ENCODE measurements at regions of chr20 and their contacts with region 1.

Region 1: DNA sequence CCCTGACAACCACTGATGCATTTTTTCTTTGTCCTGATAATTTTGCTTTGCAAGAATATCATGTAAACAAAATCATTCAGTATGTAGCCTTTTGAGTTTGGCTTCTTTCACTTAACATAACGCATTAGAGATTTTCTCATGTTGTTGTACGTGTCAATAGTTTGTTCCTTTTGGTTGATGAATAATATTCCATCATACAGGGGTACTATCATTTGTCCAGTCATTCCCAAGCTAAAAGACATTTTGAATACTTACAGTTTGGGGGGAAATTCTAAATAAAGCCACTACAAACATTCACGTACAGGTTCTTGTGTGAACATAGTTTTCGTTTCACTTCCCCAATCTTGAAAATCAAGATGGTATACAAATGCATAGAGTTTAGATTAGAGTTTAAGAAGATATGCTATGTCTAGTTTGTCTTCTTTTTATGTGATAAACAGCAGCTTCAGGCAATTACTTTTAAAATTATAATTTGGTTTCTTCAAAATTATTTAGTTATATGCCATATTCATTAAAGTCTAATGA is 5.2 kb downstream of the HAO1 start:
- DNase-seq: no peak
- H3K4me3 Mint-ChIP-seq: no peak overlapping the region
- H3K27ac Mint-ChIP-seq: no peak overlapping the region
- H3K4me1 Mint-ChIP-seq: no peaks in the 10 kb centered on the region
- H3K27me3 Mint-ChIP-seq: no peaks in the 10 kb centered on the region
- CTCF ChIP-seq: no peak

Region 2: DNA sequence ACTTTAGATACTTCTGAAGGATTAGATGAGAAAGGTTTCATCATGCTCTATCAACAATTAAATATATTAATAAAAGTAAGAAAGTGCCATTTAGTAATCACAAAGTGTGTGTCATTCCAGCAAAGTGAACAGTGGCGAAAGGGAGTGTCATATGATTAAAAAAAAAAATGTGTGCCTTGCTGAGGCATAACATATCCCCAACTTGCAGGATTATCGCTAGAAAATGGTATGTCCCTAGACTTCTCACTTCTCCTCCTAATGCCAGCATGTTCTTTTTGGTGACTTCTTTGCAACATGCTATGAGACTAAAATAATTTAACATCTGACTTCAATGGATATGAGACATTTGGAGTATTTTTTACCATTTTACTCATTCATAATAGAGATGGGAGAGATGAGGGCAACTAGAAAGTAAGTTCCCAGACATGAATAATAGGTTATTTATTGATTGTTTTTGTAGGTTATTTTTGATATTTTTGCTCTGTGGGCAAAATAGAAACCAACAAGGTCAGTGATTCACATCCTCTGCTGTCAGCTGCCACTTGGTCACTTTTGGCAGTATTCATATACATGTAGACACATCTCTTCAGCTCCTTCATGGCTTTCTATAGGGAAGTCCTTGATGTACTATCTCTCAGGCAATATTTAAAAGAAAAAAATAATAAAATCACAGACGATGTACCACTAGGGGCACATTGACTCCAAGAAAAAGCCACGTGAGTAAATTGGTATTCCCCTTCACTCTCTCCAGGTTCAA is 797.5 kb before region 1 on chr20:
- CTCF ChIA-PET with region 1: no interaction called
- POLR2A ChIA-PET with region 1: no interaction called
- intact Hi-C with region 1: no loop called
- DNase-seq: no peak
- H3K4me3 Mint-ChIP-seq: no peak overlapping the region
- H3K27ac Mint-ChIP-seq: no peak overlapping the region
- H3K4me1 Mint-ChIP-seq: peaks cover 5% of the 10 kb centered on the region
- H3K27me3 Mint-ChIP-seq: no peaks in the 10 kb centered on the region
- CTCF ChIP-seq: no peak

Region 3: GRCh38 chr20:7682916-7683315 is 252.2 kb before region 1 on chr20:
- CTCF ChIA-PET with region 1: no interaction called
- POLR2A ChIA-PET with region 1: no interaction called
- intact Hi-C with region 1: no loop called
- DNase-seq: no peak
- H3K4me3 Mint-ChIP-seq: no peak overlapping the region
- H3K27ac Mint-ChIP-seq: no peak overlapping the region
- H3K4me1 Mint-ChIP-seq: no peaks in the 10 kb centered on the region
- H3K27me3 Mint-ChIP-seq: no peaks in the 10 kb centered on the region
- CTCF ChIP-seq: no peak

Region 4: GRCh38 chr20:7959484-7959883 is 24.4 kb after region 1 on chr20:
- CTCF ChIA-PET with region 1: interaction called, 10 read pairs
- POLR2A ChIA-PET with region 1: interaction called, 4 read pairs
- intact Hi-C with region 1: no loop called
- DNase-seq: peak; percentile 74
- H3K4me3 Mint-ChIP-seq: no peak overlapping the region
- H3K27ac Mint-ChIP-seq: no peak overlapping the region
- H3K4me1 Mint-ChIP-seq: peaks cover 6% of the 10 kb centered on the region
- H3K27me3 Mint-ChIP-seq: peaks cover 6% of the 10 kb centered on the region
- CTCF ChIP-seq: no peak

Region 5: DNA sequence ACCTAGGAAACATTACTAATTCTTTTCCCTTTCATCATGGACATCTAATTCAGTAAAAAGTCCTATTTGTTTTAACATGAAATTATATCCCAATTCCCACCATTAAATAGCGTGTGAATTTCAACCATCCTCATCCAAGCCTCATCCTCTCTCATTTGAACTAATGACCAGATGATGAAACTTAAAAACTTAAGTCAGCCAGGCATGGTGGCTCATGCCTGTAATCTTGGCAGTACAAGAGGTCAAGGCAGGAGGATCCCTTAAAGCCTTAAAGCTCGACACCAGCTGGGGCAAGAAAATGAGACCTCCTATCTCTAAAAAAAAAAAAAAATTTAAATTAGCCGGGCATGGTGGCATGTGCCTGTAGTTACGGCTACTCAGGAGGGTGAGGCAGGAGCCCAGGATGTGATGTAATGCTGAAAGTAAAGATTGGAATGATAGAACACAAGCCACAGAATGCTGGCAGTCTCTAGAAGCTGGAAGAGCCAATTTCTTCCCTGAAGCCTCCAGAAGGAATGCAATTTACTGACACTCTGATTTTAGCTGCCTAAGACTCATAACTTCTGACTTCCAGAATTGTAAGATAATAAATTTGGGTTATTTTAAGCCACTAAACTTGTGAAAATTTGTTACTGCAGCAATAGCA is 32.2 kb after region 1 on chr20:
- CTCF ChIA-PET with region 1: interaction called, 12 read pairs
- POLR2A ChIA-PET with region 1: no interaction called
- intact Hi-C with region 1: no loop called
- DNase-seq: peak; percentile 34
- H3K4me3 Mint-ChIP-seq: no peak overlapping the region
- H3K27ac Mint-ChIP-seq: peak overlapping the region; percentile 3
- H3K4me1 Mint-ChIP-seq: peaks cover 5% of the 10 kb centered on the region
- H3K27me3 Mint-ChIP-seq: no peaks in the 10 kb centered on the region
- CTCF ChIP-seq: no peak

Region 6: DNA sequence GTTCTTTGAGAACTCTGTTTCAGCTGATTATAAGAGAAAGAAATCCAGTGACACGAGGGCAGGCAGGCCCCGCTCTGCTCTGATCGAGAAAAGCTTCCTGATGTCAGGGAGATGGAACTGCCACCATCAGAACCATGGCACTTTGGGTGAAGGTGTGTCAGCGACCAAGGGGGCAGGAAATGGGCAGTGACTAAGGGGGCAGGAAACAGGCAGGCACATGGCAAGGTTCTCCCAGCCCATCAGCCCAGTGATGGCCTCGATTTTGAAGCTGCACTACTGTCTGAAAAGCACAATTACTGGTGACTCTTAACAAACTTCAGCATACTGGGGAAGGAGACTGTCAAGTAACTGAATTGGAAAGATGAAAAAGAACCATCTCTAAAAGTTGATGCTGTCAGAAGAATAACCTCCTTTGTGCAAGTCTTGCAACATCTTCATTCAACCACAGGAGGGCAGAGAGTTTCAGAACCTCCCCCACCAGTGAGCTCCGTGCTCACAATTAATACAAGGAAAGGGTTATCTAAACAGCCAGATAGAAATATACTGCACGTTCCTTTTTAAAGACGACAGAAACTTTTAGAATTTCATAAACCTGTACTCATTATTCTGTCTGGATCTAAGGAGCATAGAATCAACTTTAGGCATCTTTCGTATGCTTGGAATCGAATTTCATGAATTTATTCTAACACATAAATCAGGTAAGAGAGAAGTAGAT is 45.4 kb after region 1 on chr20:
- CTCF ChIA-PET with region 1: interaction called, 11 read pairs
- POLR2A ChIA-PET with region 1: no interaction called
- intact Hi-C with region 1: no loop called
- DNase-seq: peak; percentile 41
- H3K4me3 Mint-ChIP-seq: no peak overlapping the region
- H3K27ac Mint-ChIP-seq: no peak overlapping the region
- H3K4me1 Mint-ChIP-seq: no peaks in the 10 kb centered on the region
- H3K27me3 Mint-ChIP-seq: no peaks in the 10 kb centered on the region
- CTCF ChIP-seq: peak; percentile 44

Region 7: DNA sequence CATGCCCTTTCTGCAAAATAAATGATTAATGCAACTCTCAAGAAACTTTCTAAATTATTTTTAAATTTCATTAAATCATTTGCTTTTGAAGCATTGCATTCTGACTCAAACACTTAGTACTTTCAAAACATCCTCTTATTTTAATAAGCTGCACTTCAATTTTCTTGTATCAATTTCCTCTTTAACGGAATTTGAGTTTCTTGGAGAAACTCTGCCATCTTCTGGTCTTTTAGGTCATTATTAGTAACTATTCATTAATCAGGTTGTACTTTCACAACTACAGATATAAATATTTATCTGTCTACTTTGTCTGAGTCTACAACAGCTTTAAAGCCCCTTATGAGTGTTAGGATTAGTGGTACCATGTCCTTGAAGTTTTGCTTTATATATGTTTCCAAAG is 54.3 kb after region 1 on chr20:
- CTCF ChIA-PET with region 1: interaction called, 29 read pairs
- POLR2A ChIA-PET with region 1: no interaction called
- intact Hi-C with region 1: no loop called
- DNase-seq: no peak
- H3K4me3 Mint-ChIP-seq: no peak overlapping the region
- H3K27ac Mint-ChIP-seq: no peak overlapping the region
- H3K4me1 Mint-ChIP-seq: no peaks in the 10 kb centered on the region
- H3K27me3 Mint-ChIP-seq: no peaks in the 10 kb centered on the region
- CTCF ChIP-seq: no peak

Region 8: GRCh38 chr20:8019246-8019997 is 84.3 kb after region 1 on chr20 and contains the start of gene TMX4:
- CTCF ChIA-PET with region 1: interaction called, 13 read pairs
- POLR2A ChIA-PET with region 1: interaction called, 4 read pairs
- intact Hi-C with region 1: no loop called
- DNase-seq: peak; percentile 95
- H3K4me3 Mint-ChIP-seq: peak within 1 kb of the TSS; percentile 92
- H3K27ac Mint-ChIP-seq: peak within 1 kb of the TSS; percentile 68
- H3K4me1 Mint-ChIP-seq: peaks cover 13% of the 10 kb centered on the region
- H3K27me3 Mint-ChIP-seq: no peaks in the 10 kb centered on the region
- CTCF ChIP-seq: peak; percentile 17
- total RNA-seq, gene TMX4: 47.4 and 60.5 TPM in 2 replicates

Region 9: GRCh38 chr20:8131598-8132483 is 196.8 kb after region 1 on chr20 and contains the start of gene PLCB1:
- CTCF ChIA-PET with region 1: interaction called, 6 read pairs
- POLR2A ChIA-PET with region 1: interaction called, 3 read pairs
- intact Hi-C with region 1: loop called (anchors 5 kb)
- DNase-seq: peak; percentile 79
- H3K4me3 Mint-ChIP-seq: peak within 1 kb of the TSS; percentile 75
- H3K27ac Mint-ChIP-seq: peak within 1 kb of the TSS; percentile 43
- H3K4me1 Mint-ChIP-seq: peaks cover 8% of the 10 kb centered on the region
- H3K27me3 Mint-ChIP-seq: peaks cover 15% of the 10 kb centered on the region
- CTCF ChIP-seq: peak; percentile 95
- total RNA-seq, gene PLCB1: 5.9 and 8.2 TPM in 2 replicates

Measured in MCF 10A (cell line).